Dendritic cell treated with granulocyte-macrophage colony-stimulating factor and Interleukin-4, amounts not matched to agents 40 ng/mL and 50 ng/mL, for 4 days (primary cell): ENCODE measurements at regions of chr9 and their contacts with region 1.

Region 1: GRCh38 chr9:13427587-13427986 is 148.1 kb upstream of the MPDZ start:
- H3K4me3 Mint-ChIP-seq: no peak overlapping the region
- H3K27ac Mint-ChIP-seq: no peak overlapping the region
- H3K4me1 Mint-ChIP-seq: no peaks in the 10 kb centered on the region
- H3K27me3 Mint-ChIP-seq: no peaks in the 10 kb centered on the region

Region 2: GRCh38 chr9:14353222-14354056 is 925.9 kb after region 1 on chr9:
- intact Hi-C with region 1: loop called (anchors 1 kb)
- H3K4me3 Mint-ChIP-seq: no peak overlapping the region
- H3K27ac Mint-ChIP-seq: no peak overlapping the region
- H3K4me1 Mint-ChIP-seq: peaks cover 5% of the 10 kb centered on the region
- H3K27me3 Mint-ChIP-seq: peaks cover 40% of the 10 kb centered on the region

Region 3: GRCh38 chr9:14428781-14429230 is 1001.2 kb after region 1 on chr9:
- intact Hi-C with region 1: loop called (anchors 10 kb)
- H3K4me3 Mint-ChIP-seq: no peak overlapping the region
- H3K27ac Mint-ChIP-seq: no peak overlapping the region
- H3K4me1 Mint-ChIP-seq: no peaks in the 10 kb centered on the region
- H3K27me3 Mint-ChIP-seq: peaks cover 6% of the 10 kb centered on the region

Region 4: DNA sequence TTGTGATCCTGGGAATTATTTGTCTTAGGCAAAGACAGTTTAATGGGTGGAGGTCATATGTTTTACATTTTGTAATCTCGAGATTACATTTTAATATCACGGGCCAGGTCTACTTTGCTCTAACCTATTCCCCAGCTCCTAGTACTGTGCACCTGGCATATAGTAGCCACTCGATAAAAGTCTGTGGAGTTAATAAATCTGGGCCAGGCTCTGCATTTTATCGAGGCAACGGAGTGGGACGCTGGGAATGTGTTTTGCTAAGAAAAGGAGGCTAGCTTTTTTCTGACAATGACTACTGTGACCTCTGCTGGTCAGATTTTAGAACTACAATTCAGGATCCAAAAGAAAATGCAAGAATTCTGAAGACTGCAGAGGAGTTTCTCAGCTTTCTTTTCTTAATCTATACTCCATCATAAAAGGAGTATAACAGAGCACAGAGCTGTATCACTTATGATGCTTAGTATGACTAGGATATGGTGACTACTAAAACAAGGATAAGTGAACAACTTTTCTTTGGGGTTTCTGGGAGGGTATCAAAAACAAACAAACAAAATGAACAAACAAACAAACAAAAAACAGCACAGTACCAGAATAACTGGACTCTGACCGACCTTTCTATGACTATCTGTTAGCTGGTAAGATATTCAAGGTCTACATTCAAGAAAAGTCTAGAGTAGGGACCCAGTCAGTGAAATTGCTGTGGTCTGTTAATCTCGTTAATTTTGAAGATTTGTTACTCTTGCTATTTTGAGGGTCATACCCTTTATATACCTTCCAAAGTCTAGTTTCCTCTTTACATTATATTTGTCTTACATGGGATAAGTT is 1341.0 kb after region 1 on chr9:
- intact Hi-C with region 1: loop called (anchors 5 kb)
- H3K4me3 Mint-ChIP-seq: no peak overlapping the region
- H3K27ac Mint-ChIP-seq: no peak overlapping the region
- H3K4me1 Mint-ChIP-seq: no peaks in the 10 kb centered on the region
- H3K27me3 Mint-ChIP-seq: peaks cover 3% of the 10 kb centered on the region